ENCODE measurements at regions of chr19 and their contacts with region 1.

Region 1: DNA sequence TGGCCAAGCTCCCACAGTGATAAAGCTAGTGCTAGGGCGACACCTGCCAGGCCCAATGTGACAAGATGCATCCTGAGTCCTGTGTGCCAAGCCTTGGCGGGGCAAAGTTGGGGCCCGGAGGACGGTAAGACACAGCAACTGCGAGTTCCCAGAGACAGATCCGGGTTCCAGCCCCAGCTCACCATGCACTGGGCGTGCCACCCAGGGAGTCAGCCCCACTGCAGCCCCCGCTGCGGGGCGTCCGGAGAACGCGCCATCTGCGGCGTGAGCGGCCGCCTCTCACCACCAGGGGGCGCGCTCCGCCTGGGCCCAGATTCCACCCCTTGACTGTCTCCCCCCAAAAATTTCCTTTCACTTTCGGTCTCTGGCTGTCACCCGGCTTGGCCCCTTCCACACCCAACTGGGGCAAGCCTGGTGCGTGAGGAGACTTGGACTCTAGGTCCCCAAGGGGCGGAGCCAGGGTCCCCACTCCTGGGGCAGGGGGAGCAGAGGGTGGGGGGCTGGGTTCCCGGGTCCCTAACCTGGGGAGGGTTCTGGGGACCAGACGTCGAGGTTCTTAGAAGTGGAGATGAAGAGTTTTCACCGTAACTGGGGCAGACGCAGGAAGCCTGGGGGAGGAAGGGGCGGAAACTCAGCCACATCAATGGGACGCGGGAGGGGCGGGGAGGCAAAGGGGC is at the start of gene FLT3LG:
- DNase-seq: peak; percentile 96
- ATAC-seq: peak; percentile 73
- H3K4me3 Mint-ChIP-seq: peak within 1 kb of the TSS; percentile 87
- H3K27ac Mint-ChIP-seq: peak within 1 kb of the TSS; percentile 85
- H3K4me1 Mint-ChIP-seq: peaks cover 54% of the 10 kb centered on the region
- H3K27me3 Mint-ChIP-seq: no peaks in the 10 kb centered on the region
- total RNA-seq, gene FLT3LG: 112 to 151 TPM

Region 2: DNA sequence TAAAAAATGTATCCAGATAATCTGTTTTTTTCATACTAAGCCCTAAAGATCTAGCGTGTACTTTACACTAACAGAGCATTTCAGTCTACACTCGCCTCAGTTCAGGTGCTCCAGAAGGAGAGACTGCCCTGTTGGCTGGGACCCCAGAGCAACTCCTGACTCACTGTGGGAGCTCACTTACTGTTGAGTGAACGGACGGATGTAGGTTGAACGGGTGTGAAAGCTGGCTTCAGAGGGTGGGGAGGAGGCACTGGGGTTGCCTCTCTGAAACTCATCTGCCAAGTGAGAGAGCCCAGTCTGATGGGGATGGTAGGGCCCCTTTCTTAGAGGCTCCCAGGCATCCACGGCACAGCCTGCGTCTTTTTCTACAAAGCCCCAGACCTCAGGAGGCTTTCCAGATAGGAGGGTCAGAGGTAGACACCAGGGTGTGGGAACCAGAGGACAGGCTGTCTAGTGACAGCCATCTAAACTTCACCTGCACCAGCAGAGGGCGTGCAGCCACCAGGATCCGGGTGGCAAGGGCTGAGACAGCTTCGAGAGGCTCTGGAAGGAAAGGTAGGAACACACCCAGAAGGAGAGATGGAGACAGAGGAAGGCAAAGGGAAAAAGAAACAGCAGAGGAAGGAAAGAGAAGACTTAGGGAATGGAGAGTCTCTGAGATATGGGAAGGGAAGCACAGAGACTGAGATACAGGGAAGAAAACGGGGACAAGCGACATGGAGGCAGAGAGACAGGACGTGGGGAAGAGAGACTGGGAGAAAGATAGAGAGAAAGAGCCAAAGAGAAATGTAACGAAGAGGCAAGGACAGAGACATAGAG is 82.2 kb before region 1 on chr19:
- CTCF ChIA-PET with region 1: interaction called, 87 read pairs
- DNase-seq: peak; percentile 87
- ATAC-seq: peak; percentile 91
- H3K4me3 Mint-ChIP-seq: no peak overlapping the region
- H3K27ac Mint-ChIP-seq: peak overlapping the region; percentile 58
- H3K4me1 Mint-ChIP-seq: peaks cover 30% of the 10 kb centered on the region
- H3K27me3 Mint-ChIP-seq: no peaks in the 10 kb centered on the region

Region 3: DNA sequence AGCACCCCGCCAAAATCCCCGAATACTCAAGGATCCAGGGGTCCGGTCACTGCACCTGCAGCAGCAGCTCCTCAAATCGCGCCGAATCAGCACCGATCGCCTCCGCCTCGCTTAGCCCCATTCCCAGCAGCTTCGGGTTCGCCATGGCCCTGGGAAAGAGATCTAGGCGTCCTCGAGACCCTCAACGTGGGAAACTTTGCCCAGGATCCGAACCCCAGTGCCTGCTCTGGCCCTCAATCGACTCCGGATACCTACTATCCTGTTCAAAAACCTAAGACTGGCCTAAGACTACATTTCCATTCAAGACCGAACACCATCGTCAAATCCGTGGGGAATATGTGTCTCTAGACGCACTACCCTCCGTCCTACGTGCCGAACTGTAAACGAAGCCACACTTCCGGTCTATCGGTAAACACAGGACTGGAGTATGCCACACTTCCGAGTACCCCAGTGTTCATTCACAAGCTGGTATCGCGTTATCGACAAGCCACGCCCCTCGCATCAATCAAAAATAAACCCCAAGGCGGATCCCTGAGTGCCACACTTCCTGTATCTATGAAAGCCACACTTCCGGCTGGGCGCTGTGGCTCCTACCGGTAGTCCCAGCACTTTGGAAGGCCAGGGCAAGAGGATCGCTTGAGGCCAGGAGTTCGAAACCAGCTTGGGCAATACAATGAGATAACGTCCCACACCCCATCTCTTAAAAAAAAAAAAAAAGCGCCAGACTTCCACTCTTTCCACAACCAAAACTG is 22.4 kb before region 1 on chr19 and contains the start of gene PIH1D1:
- CTCF ChIA-PET with region 1: interaction called, 185 read pairs
- DNase-seq: peak; percentile 99
- ATAC-seq: peak; percentile 71
- H3K4me3 Mint-ChIP-seq: peak within 1 kb of the TSS; percentile 99
- H3K27ac Mint-ChIP-seq: peak within 1 kb of the TSS; percentile 100
- H3K4me1 Mint-ChIP-seq: peaks cover 60% of the 10 kb centered on the region
- H3K27me3 Mint-ChIP-seq: no peaks in the 10 kb centered on the region
- total RNA-seq, gene PIH1D1: 148 to 158 TPM

Region 4: GRCh38 chr19:49487277-49488045 is 13.5 kb after region 1 on chr19 and contains the start of gene RPL13A:
- CTCF ChIA-PET with region 1: interaction called, 19 read pairs
- DNase-seq: peak; percentile 100
- ATAC-seq: peak; percentile 88
- H3K4me3 Mint-ChIP-seq: peak within 1 kb of the TSS; percentile 98
- H3K27ac Mint-ChIP-seq: peak within 1 kb of the TSS; percentile 94
- H3K4me1 Mint-ChIP-seq: peaks cover 46% of the 10 kb centered on the region
- H3K27me3 Mint-ChIP-seq: no peaks in the 10 kb centered on the region
- total RNA-seq, gene RPL13A: 2,143 to 2,523 TPM

Region 5: GRCh38 chr19:49492573-49493405 is 18.8 kb after region 1 on chr19:
- CTCF ChIA-PET with region 1: interaction called, 19 read pairs
- DNase-seq: no peak
- ATAC-seq: no peak
- H3K4me3 Mint-ChIP-seq: no peak overlapping the region
- H3K27ac Mint-ChIP-seq: peak overlapping the region; percentile 78
- H3K4me1 Mint-ChIP-seq: peaks cover 62% of the 10 kb centered on the region
- H3K27me3 Mint-ChIP-seq: no peaks in the 10 kb centered on the region

Region 6: DNA sequence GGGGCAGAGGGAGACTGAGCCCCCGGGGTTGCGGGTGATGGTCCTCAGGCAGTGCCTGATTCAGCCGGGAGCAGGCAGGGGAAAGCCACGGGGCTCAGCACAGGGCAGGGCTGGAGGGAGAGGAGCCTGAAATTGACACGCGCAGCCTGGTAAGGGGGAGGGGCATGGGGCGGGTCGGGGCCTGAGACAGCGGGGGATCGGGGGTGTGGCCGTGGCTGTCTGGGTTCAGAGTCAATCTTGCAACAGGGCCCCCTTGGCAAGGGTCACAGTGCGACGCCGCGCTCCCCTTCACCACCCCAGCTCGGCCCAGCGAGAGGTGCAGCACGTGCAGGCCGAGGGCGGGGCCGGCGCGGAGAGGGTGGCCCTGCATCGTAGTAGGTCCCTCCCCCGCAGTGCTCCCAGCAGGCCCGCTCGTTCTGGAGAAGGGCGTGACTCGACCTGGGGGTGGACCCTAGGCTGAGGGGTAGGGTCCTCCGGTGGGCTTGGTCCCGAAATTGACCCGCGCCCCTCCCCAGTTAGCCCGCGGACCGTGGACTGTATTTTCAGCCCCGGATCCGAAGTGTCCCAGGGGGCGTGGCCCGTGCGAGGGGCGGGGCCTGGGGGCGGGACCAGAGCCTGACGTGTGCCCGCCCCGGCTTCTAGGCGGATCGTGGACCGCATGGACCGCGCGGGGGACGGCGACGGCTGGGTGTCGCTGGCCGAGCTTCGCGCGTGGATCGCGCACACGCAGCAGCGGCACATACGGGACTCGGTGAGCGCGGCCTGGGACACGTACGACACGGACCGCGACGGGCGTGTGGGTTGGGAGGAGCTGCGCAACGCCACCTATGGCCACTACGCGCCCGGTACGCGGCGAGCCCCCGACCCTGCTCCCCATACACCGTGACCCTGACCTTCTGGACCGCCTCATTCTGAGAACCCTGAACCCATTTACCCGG is 59.8 kb after region 1 on chr19:
- CTCF ChIA-PET with region 1: no interaction called
- DNase-seq: peak; percentile 86
- ATAC-seq: peak; percentile 94
- H3K4me3 Mint-ChIP-seq: peak overlapping the region; percentile 74
- H3K27ac Mint-ChIP-seq: peak overlapping the region; percentile 62
- H3K4me1 Mint-ChIP-seq: peaks cover 23% of the 10 kb centered on the region
- H3K27me3 Mint-ChIP-seq: peaks cover 2% of the 10 kb centered on the region

Region 7: GRCh38 chr19:49553451-49554271 is 79.7 kb after region 1 on chr19:
- CTCF ChIA-PET with region 1: interaction called, 10 read pairs
- DNase-seq: peak; percentile 67
- ATAC-seq: peak; percentile 64
- H3K4me3 Mint-ChIP-seq: no peak overlapping the region
- H3K27ac Mint-ChIP-seq: peak overlapping the region; percentile 93
- H3K4me1 Mint-ChIP-seq: peaks cover 55% of the 10 kb centered on the region
- H3K27me3 Mint-ChIP-seq: no peaks in the 10 kb centered on the region

Region 8: GRCh38 chr19:49676690-49677231 is 202.8 kb after region 1 on chr19:
- CTCF ChIA-PET with region 1: interaction called, 18 read pairs
- DNase-seq: peak; percentile 100
- ATAC-seq: peak; percentile 79
- H3K4me3 Mint-ChIP-seq: peak overlapping the region; percentile 74
- H3K27ac Mint-ChIP-seq: peak overlapping the region; percentile 99
- H3K4me1 Mint-ChIP-seq: peaks cover 38% of the 10 kb centered on the region
- H3K27me3 Mint-ChIP-seq: no peaks in the 10 kb centered on the region

Measured in activated CD8-positive, alpha-beta memory T cell treated with anti-CD3 and anti-CD28 coated beads, Interleukin-2, amount 10 ng/mL, durations not matched to agents 7 days and 5 days (primary cell).